Right ventricle myocardium inferior (tissue), 1 donor: ENCODE measurements at regions of chrX and their contacts with region 1.

Region 1: DNA sequence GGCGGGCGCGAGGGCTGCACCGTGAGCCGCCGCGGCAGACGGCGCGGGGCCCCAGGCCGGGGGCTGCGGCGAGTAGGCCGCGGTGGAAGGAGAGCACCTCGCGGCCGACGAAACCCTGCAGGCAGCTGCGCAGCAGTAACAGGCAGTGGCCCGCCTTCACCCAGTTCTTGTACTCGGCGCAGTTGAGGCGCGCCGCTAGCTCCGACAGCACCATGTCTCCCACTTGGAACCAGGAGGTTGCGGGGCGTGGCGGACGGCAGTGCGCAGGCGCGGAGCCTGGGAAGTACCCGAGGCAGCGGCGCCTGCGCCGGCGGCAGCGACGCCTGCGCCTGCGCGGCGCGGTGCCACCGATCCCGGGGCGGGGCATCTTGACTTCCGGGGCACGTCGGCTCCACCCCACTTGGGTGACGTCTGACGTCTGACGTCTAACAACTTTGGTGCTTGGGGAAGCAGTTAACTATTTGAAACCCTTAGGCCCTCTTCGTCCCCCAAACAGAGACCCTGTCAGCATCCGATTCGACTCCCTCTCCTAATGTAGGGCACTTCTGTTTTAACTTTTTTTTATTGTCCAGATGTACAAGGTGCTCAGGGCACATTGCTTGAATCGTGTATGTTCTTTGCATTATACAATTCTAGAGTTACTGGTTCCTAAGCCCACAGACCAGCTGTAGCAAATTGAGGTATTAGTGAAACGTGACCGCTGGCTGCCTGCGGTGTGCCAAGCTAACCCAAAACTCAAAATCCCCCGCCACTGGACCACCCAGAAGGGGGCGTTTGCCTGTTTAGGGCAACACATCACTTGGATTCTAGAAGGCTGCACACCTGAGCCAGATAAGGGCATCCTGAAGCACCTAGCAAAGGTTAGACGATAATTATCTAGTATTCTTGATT is at the start of gene CXorf38:
- DNase-seq: peak; percentile 94
- ATAC-seq: peak; percentile 91
- total RNA-seq, gene CXorf38: 5.2 TPM

Region 2: DNA sequence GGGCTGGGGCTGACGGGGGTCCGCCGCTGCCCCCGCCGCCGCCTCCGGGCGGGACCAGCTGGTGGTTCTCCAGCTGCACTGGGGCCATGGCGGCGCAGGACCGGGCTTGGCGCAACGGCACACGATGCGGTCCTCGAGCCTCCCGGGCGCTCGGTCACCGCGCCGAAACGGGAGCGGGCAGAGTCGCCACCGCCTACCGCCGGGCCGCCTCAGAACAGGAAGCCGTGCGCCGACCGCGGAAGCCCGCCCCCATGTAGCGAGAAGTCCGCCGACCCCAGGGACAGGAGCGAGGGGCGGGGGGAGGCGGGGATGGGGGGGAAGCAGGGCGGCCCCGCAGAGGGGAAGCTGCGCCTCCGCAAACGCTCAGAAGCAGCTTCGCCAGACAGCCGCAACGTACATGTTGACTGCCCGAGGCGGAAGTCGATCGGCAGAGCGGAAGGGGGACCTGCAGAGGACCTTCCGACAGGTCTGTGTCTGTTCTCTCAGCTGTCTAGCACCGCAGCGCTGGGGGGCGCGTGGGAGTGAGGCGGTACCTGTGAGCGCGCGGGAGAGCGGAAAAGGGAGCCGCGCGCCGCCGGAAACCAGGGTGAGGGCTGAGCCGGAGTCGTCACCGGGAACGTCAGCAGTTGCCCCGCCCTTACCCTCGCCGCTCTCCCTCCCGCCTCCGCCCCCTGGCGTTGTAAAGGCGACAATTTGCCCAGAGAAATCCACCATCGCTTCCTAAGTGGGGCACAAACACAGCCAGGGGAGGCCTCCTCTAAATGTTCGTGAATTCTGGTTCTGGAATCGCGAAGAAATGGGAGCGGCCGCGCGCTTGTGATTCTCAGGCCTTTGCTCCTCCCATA is 88.0 kb after region 1 on chrX and contains the start of gene MED14:
- intact Hi-C with region 1: loop called (anchors 10 kb)
- DNase-seq: peak; percentile 89
- ATAC-seq: peak; percentile 99
- total RNA-seq, gene MED14: 26.3 TPM

Region 3: GRCh38 chrX:40792433-40792832 is 144.9 kb after region 1 on chrX:
- intact Hi-C with region 1: loop called (anchors 2 kb)
- DNase-seq: no peak
- ATAC-seq: no peak

Region 4: DNA sequence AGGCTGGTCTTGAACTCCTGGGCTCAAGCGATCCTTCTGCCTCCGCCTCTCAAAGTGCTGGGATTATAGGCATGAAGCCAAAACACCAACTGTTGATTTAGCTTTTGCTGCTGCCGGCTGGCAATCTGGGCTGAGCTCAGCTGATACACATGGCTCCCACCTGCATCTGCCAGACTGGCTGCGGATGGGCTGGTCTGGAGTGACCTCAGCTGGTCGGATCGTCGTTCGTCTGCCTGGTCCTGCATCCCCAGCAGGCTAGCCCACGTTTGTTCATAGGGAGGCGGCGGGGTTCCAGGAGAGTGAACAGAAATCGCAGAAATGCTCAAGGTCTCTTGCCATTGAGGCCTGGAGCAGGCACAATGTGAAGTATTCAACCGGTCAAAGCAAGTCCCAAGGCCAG is 612.0 kb after region 1 on chrX:
- intact Hi-C with region 1: loop called (anchors 10 kb)
- DNase-seq: no peak
- ATAC-seq: no peak